Motor neuron (in vitro differentiated cells): ENCODE measurements at regions of chr5 and their contacts with region 1.

Region 1: DNA sequence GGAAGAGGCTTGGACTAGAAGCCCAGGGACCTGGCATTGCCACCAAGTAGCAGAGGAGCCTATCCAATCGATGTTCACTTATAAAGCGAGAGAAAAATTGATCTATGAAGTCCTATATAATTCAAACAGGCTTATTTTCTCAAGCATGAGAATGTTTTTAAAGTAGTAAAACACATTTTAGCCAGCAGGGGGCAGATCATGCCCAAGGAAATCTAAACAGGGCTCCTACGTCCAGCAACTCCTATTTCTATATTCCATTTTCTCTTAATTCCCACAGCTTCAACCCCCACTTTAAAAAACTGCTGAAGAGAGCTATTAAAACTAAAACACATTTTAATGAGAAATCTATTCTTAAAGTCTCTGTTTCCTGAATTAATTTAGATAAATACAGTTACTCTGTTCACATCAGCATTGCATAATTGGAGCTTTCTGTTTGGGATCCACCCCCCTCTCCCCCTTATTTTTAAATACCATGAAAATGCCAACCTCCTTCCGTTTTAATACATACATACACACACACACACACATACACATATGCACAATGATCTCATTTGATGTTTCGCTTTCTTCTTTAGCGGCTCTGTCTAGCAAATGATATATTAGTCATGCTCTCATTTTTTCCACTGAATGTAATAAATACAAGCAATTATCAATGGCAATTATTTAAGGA is 144.9 kb downstream of the MYO10 start:
- ATAC-seq: peak in 7 of 8 experiments; percentile 40 to 82 (median 61)
- H3K4me3 ChIP-seq: no peak overlapping the region
- H3K27ac ChIP-seq: no peak overlapping the region
- H3K4me1 ChIP-seq: peaks cover 4 to 10% of the 10 kb centered on the region in 2 donors

Region 2: DNA sequence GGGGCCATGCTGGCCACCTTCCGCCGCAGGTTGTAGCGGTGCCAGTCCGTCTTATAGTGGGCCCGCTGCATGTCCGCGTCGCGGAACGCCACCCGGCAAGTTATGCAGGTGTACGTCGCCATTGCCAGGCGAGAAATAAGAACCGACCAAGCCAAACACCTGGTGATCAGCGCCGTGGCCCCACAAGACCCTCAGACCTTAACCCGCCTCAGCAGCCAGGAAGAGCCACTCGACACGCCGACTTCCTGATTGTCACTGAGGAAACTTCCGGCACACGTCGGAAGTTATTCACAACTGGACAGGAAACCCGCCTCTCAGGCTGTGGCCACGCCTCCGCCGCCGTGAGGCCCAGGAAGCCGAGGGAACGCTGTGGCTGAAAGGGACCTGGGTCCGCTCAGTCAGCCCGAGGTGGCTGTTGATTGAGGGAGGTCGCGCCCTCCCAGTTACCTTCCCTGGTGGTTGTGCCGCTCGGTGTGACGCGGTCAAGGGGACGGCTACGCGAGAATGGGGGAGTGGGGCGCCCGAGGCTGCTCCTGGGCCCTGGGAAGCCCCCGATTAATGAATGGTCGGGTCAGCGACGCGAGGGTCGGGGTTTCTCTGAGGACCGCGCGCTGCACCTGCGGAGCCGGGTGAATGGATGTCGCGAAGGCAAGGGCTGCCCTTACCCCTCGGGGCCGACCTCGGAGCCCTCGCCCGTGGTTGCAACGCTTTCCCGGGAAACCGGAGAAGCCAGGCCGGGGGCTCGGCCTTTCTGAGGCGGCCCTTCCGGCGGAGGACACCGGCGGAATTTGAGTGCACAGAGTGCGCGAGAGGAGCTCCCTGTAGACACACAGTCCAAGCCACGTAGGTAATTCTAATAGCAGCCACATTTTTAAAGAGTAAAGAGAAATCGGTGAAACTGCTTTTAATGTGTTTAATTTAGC is 325.4 kb before region 1 on chr5 and contains the start of gene ZNF622:
- in situ Hi-C with region 1: no loop called
- ATAC-seq: peak; percentile 86 to 97 (median 96)
- H3K4me3 ChIP-seq: peak within 1 kb of the TSS; percentile 69 to 75 (median 72)
- H3K27ac ChIP-seq: peak within 1 kb of the TSS; percentile 77 to 86
- H3K4me1 ChIP-seq: peaks cover 16 to 40% of the 10 kb centered on the region in 2 donors
- total RNA-seq, gene ZNF622: 27.6 to 63.3 (median 53.9) TPM

Region 3: GRCh38 chr5:16934123-16934522 is 143.0 kb after region 1 on chr5:
- in situ Hi-C with region 1: no loop called
- ATAC-seq: peak; percentile 20 to 53 (median 38)
- H3K4me3 ChIP-seq: peak overlapping the region; percentile 20 to 94 (median 79)
- H3K27ac ChIP-seq: no peak overlapping the region
- H3K4me1 ChIP-seq: peaks cover 6% of the 10 kb centered on the region in 2 donors

Region 4: GRCh38 chr5:18305297-18305924 is 1514.2 kb after region 1 on chr5:
- in situ Hi-C with region 1: loop called in 1 of 9 experiments (anchors 25 kb)
- ATAC-seq: peak; percentile 36 to 97 (median 54)
- H3K4me3 ChIP-seq: no peak overlapping the region
- H3K27ac ChIP-seq: no peak overlapping the region
- H3K4me1 ChIP-seq: no peaks in the 10 kb centered on the region